Natural killer cell (primary cell): ENCODE measurements at regions of chr12 and their contacts with region 1.

Region 1: DNA sequence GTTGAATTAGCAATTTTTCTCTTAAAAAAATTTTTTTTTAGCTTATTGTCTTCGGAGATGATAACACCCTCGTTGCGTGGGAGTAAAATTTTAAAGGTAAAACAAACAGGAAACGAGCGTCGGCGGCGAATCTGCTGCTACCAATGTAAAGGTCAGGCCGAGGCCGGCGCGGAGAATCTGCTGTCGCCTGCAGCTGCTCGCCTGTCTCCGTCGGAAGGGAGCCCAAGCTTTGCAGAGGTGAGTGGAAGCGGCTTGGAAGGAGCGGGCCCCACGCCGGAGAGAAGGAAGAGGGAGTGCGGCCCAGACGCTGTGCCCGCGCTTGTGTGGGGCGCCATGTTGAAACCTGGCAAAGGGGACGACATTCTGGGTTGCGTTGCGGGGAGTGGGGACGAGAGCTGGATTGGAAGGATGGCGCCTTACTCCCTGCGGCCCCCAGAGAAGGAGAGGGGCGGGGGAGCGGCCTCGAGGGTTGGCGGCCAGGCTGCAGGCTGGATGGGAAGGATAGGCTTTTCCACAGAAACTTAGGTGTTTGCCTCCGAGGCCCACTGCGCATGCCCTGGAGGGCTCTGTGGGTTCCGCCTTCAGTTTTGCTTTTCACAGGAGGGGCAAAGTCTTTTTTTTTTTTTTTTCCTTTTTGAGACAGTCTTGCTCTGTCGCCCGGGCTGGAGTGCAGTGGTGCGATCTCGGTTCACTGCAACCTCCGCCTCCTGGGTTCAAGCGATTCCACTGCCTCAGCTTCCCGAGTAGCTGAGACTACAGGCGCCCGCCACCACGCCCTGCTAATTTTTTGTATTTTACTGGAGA is at the start of gene SNRNP35:
- DNase-seq: peak; percentile 84 to 94
- ATAC-seq: peak; percentile 75 to 83 (median 82)
- H3K4me3 ChIP-seq: peak within 1 kb of the TSS; percentile 98
- H3K4me3 Mint-ChIP-seq: peak within 1 kb of the TSS; percentile 100
- H3K27ac ChIP-seq: peak within 1 kb of the TSS; percentile 98
- H3K27ac Mint-ChIP-seq: peak within 1 kb of the TSS; percentile 100
- H3K4me1 ChIP-seq: peaks cover 13% of the 10 kb centered on the region
- H3K4me1 Mint-ChIP-seq: peaks cover 17 to 30% of the 10 kb centered on the region in 2 donors
- H3K27me3 ChIP-seq: no peaks in the 10 kb centered on the region
- H3K27me3 Mint-ChIP-seq: no peaks in the 10 kb centered on the region
- CTCF ChIP-seq: no peak
- total RNA-seq, gene SNRNP35: 25.6 to 34.8 (median 28.7) TPM

Region 2: GRCh38 chr12:123388177-123388947 is 69.8 kb before region 1 on chr12:
- intact Hi-C with region 1: loop called (anchors 5 kb)
- DNase-seq: peak; percentile 68 to 86
- ATAC-seq: peak; percentile 64 to 79 (median 71)
- H3K4me3 ChIP-seq: peak overlapping the region; percentile 77
- H3K4me3 Mint-ChIP-seq: peak overlapping the region; percentile 85
- H3K27ac ChIP-seq: peak overlapping the region; percentile 88
- H3K27ac Mint-ChIP-seq: peak overlapping the region; percentile 80 to 82
- H3K4me1 ChIP-seq: peaks cover 50% of the 10 kb centered on the region
- H3K4me1 Mint-ChIP-seq: peaks cover 36 to 46% of the 10 kb centered on the region in 2 donors
- H3K27me3 ChIP-seq: no peaks in the 10 kb centered on the region
- H3K27me3 Mint-ChIP-seq: no peaks in the 10 kb centered on the region
- CTCF ChIP-seq: no peak

Region 3: DNA sequence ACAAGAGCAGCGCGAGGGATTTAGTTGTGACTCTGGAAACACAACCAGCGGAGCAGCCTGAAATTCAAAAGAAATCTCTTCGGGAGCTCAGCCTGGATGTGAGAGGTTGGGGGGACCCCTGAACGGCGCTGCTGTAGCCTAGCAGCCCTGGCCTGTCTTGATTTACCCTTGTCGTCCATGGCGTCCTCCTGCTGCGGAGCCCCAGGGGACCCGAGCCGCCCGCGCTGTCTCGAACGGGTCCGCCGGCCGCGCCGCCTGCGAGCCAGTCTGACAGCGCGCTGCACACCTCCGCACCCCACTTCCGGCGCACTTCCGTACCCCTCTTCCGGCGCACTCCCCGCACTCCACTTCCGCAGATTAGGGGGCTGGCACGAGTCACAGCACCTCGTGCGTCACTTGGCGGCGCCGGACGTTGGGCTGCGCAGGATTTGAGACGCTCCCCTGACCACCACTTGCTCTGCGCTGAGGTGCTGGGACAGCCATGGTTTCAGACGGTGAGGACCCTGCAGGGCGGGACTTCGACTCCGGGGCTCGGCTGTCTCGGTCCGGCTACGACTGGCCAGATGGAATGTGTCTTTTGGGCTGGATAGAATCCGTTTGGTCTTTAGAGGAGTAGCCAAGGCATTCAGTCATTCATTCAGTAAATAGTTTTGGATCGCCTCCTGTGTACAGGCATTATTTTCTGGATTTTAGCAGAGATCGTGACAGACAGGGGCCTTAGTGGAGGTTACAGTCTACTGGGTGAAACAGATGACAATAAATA is 175.4 kb after region 1 on chr12 and contains the starts of genes EIF2B1 and GTF2H3:
- intact Hi-C with region 1: loop called (anchors 1 kb)
- DNase-seq: peak; percentile 96 to 98
- ATAC-seq: peak; percentile 93 to 98 (median 98)
- H3K4me3 ChIP-seq: peak within 1 kb of the TSS; percentile 97
- H3K4me3 Mint-ChIP-seq: peak within 1 kb of the TSS; percentile 97
- H3K27ac ChIP-seq: peak within 1 kb of the TSS; percentile 88
- H3K27ac Mint-ChIP-seq: peak within 1 kb of the TSS; percentile 98
- H3K4me1 ChIP-seq: peaks cover 20% of the 10 kb centered on the region
- H3K4me1 Mint-ChIP-seq: peaks cover 26 to 28% of the 10 kb centered on the region in 2 donors
- H3K27me3 ChIP-seq: no peaks in the 10 kb centered on the region
- H3K27me3 Mint-ChIP-seq: no peaks in the 10 kb centered on the region
- CTCF ChIP-seq: no peak
- total RNA-seq, gene EIF2B1: 50.5 to 55.7 (median 51.0) TPM
- total RNA-seq, gene GTF2H3: 12.8 to 21.3 (median 21.2) TPM